Activated CD4-positive, alpha-beta T cell treated with anti-CD3 and anti-CD28 coated beads, Interleukin-2, amount 10 ng/mL, durations not matched to agents 24 days and 14 days (primary cell): ENCODE measurements at regions of chr18 and their contacts with region 1.

Region 1: DNA sequence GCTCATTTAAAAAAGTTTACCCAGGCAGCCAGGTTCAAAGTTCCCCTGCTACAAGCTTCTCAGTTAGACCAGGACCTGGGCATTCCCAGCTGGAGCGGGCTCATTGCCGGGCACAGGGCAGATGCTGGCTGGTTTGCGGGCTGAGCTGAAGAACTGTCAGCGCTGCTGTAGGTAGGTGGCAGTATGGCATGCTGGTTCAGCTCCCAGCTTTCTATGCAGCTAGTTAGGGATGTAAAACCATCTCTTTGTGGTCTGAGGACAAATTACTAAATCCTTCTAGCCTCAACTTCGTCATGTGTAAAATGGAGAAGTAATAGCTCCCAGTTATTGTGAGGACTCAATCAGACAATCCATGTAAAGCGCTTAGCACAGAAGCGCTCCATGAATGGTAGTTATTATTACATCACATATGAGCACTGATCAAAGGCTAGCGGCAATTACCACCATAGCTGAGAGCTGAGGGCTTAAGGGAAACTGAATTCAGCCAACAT is 2.4 kb upstream of the LDLRAD4 start:
- DNase-seq: peak; percentile 85
- H3K4me3 Mint-ChIP-seq: peak overlapping the region; percentile 79
- H3K27ac Mint-ChIP-seq: peak overlapping the region; percentile 84
- H3K4me1 Mint-ChIP-seq: peaks cover 30% of the 10 kb centered on the region
- H3K27me3 Mint-ChIP-seq: peaks cover 38% of the 10 kb centered on the region

Region 2: DNA sequence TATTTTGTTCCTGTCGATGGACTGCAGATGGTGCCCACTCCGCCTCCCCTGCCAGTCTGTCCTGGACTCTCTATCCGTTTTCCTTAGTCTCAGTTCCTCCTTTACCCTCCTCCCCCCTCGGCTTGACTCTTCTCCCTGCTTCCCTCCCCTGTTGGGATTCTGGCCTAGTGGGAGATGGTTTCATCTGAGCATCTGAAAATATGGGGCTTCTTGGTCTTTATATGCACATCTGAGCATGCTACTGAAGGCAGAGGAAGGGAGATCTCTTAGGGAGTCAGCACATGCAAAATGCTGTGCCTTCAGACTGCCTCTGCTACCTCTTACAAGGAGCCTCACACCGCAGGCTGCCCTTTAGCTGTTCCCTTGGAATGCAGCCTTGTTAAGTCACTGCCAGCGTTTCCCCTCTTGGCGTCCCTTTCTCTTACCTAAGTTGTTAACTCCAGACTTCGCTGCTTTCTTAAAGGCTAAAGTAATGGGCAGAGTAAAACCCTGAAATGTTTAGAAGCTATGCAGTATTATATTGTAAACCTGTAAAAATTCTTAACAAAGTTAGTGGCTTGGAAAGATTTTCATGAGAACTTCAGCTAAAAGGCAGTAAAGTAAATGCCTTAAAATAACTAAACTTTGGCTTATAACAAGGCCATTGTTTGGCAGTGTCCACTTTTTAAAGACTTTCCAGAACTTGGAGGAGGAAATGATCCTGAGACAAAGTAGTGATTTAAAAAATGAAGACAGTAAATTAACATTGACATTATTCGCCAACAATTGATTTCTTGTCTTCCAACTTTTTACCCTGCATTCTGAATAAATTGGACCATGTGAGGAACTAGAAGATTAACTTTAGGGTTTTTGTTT is 52.2 kb after region 1 on chr18:
- intact Hi-C with region 1: loop called (anchors 1 kb)
- DNase-seq: no peak
- H3K4me3 Mint-ChIP-seq: peak overlapping the region; percentile 76
- H3K27ac Mint-ChIP-seq: peak overlapping the region; percentile 90
- H3K4me1 Mint-ChIP-seq: peaks cover 64% of the 10 kb centered on the region
- H3K27me3 Mint-ChIP-seq: no peaks in the 10 kb centered on the region

Region 3: GRCh38 chr18:13381944-13382365 is 165.8 kb after region 1 on chr18:
- intact Hi-C with region 1: loop called (anchors 1 kb)
- DNase-seq: peak; percentile 87
- H3K4me3 Mint-ChIP-seq: peak overlapping the region; percentile 72
- H3K27ac Mint-ChIP-seq: peak overlapping the region; percentile 96
- H3K4me1 Mint-ChIP-seq: peaks cover 52% of the 10 kb centered on the region
- H3K27me3 Mint-ChIP-seq: no peaks in the 10 kb centered on the region

Region 4: DNA sequence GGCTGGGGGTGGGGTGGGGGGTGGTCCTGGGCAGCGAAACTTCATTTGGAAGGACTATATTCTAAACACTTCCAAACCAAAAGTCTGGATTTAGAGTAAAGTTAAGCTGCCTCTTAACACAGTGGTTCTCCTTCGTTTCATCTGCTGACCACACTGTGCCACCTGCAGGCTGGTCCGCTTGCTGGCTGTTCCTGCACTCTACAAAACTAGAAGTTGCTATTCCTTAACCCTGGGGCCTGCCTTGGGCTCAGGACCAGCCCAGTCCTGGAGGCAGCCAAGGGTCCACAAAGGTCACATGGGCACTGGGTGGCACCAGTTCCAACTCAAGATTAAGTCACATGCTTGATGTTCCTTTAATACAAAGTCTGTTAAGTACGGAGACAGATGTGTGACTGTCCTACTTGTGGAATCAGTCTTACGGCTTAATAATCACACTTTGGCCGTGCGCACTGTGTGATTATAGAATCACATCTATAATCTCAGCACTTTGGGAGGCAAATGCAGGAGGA is 314.8 kb after region 1 on chr18:
- intact Hi-C with region 1: loop called (anchors 2 kb)
- DNase-seq: peak; percentile 64
- H3K4me3 Mint-ChIP-seq: no peak overlapping the region
- H3K27ac Mint-ChIP-seq: no peak overlapping the region
- H3K4me1 Mint-ChIP-seq: peaks cover 17% of the 10 kb centered on the region
- H3K27me3 Mint-ChIP-seq: no peaks in the 10 kb centered on the region

Region 5: DNA sequence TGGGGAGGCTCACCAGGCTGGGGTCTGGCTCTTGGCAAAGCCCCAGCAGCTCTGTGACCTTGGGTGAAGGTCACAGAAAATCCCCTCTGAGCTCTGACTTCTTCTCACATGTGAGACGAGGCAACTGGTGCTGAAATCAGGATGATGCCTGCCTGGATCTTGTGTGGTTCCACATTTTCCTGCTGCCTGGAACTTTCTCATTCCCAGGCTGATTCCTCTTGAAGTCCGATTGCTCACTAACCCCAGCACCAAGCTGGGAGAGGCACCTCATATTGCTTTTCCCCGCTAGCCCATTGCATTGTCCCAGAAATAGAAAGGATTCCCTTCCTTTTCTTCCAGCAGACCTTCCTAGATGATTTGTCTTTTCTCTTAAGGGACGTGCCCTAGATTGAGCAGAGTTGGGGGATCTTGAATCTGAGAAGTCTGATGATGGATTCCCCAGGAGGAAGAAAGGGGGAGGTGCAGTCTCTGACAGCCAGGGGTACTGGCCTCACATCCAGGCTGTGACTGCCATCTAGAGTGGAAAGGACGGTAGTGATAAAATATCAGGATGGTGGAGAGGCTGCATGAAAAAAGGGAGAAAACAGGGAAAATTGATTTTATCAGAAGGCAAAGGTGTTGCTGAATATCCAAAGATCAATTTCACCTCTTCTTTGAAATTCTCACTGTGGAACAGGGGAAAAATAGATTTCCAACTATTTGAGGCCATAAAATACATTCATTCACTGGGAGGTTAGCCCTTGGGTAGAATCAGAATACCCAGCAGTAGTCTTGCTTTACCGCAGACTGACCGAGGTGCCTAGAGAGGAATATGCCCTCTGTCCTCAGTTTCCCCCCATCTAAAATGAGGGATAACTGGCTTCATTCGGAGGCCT is 413.9 kb after region 1 on chr18:
- intact Hi-C with region 1: loop called (anchors 1 kb)
- DNase-seq: peak; percentile 86
- H3K4me3 Mint-ChIP-seq: no peak overlapping the region
- H3K27ac Mint-ChIP-seq: peak overlapping the region; percentile 73
- H3K4me1 Mint-ChIP-seq: peaks cover 21% of the 10 kb centered on the region
- H3K27me3 Mint-ChIP-seq: no peaks in the 10 kb centered on the region